ENCODE measurements at regions of chr1 and their contacts with region 1.

Region 1: DNA sequence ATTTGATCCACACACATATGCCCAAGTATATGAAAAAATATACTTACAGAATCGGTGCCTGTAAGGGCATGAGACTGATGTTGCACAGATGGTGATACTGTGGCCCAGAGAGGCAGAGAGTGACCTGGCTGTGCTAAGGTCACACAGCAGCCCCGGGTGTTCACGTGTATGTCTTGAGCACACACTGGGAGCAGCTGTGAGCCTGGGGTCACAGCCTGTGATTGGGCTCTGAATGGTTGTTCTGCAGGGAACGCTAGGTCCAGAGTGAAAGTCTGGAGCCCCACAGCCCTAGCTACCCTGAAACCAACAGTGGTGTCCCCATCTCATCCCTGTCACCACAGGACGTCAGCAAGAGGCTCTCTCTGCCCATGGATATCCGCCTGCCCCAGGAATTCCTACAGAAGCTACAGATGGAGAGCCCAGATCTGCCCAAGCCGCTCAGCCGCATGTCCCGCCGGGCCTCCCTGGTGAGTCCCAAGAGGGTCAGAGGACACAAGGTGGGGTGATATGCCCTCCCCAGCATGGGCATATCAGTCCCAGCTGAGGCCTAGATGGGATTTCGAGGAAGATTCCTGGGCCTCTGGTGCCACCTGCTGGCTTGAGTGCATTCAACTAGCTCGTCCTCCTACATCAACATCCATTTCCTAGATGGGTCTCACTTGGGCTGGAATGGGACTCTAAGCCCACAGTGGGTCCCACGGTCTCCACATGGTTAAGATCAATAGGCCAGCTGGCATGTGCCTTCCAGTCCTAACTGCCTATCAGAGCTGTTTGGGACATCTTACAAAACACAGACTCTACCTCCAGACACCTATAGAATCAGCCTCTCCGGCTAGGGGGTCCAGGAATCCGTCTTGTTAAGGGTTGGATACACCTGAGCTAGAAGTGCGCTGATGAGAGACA is 19.7 kb downstream of the CDK18 start:
- DNase-seq: peak; percentile 78
- CTCF ChIP-seq: peak; percentile 77

Region 2: GRCh38 chr1:205189131-205189530 is 335.0 kb before region 1 on chr1:
- CTCF ChIA-PET with region 1: no interaction called
- POLR2A ChIA-PET with region 1: no interaction called
- DNase-seq: no peak
- CTCF ChIP-seq: no peak

Region 3: DNA sequence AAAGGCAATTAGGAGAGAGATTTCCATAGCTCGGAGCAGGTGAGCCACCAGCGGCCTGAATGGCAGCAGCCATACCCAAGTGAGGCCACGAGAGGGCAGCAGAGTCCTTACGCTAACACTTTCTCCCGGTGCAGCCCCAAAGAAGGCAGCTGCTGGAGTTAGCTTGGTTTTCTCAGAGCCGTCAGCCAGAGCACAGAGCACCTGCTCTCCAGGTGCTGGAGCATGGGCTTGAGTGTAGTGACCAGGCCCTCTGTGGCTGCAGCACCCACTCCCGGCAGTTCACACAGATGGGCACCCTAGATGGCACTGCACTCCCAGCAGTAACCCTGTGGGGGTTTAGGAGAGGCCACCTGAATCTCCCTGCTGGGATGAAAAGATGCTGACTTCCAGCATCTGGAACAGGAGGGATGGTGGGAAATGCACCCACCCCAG is 250.6 kb before region 1 on chr1:
- CTCF ChIA-PET with region 1: interaction called, 17 read pairs
- POLR2A ChIA-PET with region 1: no interaction called
- DNase-seq: peak; percentile 90
- CTCF ChIP-seq: peak; percentile 91

Region 4: DNA sequence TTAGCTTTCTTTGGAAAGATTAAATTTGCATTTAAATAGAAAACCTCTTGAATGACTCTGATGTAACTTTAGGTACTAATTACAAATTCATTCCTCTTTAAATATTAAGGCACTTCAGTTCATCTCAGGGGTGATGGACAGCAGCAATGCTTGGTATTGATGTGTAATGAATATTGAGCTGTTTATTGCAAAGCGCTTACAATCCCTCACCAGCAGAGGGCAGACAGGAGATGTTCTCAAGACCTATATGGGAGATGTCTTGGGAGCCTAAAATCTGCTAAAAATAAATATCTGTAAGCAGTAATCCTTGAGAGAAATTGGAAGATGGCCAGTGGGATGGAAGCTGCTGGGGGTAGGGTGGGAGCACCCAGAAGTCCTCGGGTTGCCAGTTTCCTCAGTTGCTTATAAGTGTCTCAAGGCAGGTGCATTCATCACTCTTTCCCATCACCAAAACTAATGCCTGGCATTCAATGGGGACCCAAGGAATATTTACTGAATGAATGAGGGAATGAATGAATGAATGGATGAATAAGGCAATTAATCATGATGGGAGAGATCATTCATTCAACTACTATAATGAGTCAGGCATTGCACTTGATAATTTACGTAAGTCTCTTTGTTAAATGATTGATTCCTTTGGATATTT is 169.8 kb before region 1 on chr1:
- CTCF ChIA-PET with region 1: interaction called, 63 read pairs
- POLR2A ChIA-PET with region 1: no interaction called
- DNase-seq: peak; percentile 60
- CTCF ChIP-seq: peak; percentile 87

Region 5: DNA sequence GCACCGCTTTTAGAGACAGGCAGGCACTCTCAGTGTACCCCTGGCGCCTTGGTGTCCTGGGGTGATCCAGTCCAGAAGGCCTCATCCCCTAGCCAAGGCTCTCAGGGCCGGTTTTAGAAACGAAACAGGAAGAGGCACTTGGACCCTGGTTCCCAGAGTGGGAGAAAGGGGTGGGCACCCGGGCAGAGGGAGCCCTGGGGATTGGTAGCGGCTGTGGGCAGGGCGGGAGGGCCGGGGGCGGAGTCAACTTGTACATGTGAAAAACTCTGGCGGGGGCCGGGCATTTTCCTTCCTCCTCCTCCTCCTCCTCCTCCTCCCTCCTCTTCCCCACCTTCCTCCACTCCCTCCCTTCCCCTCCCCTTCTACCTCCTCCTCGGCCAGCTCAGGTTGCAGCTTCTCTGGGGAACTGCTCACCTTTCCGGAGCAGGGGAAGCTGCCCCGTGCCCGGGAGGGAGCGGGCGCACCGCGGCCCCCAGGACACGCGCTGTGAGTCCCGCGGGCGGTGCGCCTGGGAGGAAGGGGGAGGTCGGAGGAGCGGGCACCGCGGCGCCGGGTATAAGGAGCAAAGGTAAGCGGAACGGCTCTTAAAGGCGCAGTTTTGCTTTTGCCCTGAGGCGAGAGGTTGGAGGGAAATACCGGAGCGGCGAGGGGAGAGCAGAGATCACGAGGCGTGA is 19.7 kb before region 1 on chr1 and contains the start of gene CDK18:
- CTCF ChIA-PET with region 1: interaction called, 21 read pairs
- POLR2A ChIA-PET with region 1: no interaction called
- DNase-seq: no peak
- CTCF ChIP-seq: no peak

Region 6: GRCh38 chr1:205543411-205544301 is 19.5 kb after region 1 on chr1:
- CTCF ChIA-PET with region 1: interaction called, 12 read pairs
- POLR2A ChIA-PET with region 1: no interaction called
- DNase-seq: no peak
- CTCF ChIP-seq: no peak

Region 7: GRCh38 chr1:205711104-205712020 is 187.2 kb after region 1 on chr1:
- CTCF ChIA-PET with region 1: interaction called, 23 read pairs
- POLR2A ChIA-PET with region 1: no interaction called
- DNase-seq: peak; percentile 58
- CTCF ChIP-seq: peak; percentile 83